Posterior vena cava (tissue), 2 donors: ENCODE measurements at regions of chr4 and their contacts with region 1.

Region 1: GRCh38 chr4:14607578-14607977 is 394.7 kb upstream of the CPEB2 start:
- DNase-seq: no peak

Region 2: GRCh38 chr4:14539246-14539645 is 68.3 kb before region 1 on chr4:
- intact Hi-C with region 1: loop called in 1 of 2 experiments (anchors 2 kb)
- DNase-seq: no peak